Brain microvascular endothelial cell (primary cell): ENCODE measurements at regions of chr9 and their contacts with region 1.

Region 1: DNA sequence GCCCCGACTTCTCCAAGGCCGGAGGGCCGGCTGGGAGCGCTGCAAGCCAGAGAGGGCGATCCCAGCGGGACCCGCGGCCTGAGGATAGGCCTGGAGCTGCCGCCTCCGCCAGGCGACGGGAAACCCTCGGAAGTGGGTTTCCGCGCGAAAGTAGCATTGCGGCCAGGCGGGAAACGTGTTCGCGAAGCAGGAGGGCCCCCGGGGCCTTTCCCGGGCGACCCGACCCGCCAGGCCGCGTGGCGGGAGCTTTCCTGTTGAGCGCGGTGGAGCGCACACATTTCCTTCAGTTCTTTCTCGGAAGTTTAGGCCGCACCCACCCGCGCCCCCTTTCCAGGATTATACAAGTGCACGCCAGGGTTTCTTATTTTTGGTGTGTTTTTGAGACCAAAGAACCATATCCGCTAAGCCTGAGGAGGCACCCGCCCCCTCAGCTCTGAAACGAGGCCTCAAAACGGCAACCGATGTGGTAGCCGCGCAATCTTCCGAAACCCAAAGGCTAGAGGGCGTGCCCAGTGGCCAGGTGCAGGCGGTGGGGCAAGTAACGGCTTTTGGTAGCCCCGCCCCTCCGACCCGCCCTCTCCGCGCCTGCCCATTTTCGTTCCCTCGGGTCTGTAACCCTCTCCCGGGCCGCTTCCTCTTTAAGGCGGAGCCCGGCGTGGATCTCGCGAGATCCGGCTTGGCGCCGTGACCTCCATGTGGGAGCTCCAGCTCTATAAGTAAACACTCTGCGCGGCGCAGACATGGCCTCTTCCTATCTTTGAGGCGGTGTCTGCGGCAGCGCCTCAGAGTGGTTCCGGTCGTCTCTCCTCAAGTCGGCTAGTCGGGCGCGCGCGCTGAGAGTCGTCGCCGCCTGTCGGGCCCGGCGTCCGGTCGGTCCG is at the start of gene UHRF2:
- DNase-seq: peak; percentile 97
- H3K4me3 ChIP-seq: peak within 1 kb of the TSS; percentile 86
- H3K27ac ChIP-seq: peak within 1 kb of the TSS; percentile 48
- H3K27me3 ChIP-seq: no peaks in the 10 kb centered on the region
- CTCF ChIP-seq: no peak

Region 2: DNA sequence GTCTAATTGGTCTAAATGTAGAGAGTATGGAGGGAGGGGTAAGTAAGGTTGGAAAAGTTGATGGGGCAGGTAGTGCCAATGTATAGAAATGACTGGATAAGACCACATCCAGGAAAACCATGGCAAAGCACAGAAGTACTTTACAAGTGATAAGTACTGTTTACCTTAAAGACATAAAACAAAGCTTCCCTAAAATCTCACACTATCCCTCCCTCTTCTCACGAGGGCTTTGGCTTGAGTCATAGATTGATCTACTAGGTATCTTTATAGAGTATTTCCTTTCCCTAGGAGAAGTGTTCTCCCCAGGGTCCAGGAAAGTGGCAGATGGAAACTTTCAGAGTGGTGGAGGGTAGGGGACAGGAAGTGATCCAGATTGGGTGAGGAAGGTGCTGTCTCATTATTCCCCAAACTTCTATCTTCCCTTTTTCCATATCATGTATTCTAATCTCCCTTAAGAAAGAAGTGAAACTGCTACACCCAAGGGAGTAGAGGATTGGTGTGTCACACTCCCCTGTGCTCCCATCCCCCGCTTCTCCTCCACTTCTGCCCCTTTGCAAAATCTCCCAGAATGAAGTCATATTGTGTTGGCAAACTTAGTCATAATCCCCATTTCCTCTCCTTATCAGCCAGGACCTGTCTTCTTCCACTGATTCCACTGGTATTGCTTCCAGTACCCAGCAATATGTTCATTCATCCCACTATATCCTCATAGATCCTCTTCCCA is 182.5 kb before region 1 on chr9:
- in situ Hi-C with region 1: no loop called
- DNase-seq: peak; percentile 35
- H3K4me3 ChIP-seq: no peak overlapping the region
- H3K27ac ChIP-seq: no peak overlapping the region
- H3K27me3 ChIP-seq: no peaks in the 10 kb centered on the region
- CTCF ChIP-seq: no peak

Region 3: DNA sequence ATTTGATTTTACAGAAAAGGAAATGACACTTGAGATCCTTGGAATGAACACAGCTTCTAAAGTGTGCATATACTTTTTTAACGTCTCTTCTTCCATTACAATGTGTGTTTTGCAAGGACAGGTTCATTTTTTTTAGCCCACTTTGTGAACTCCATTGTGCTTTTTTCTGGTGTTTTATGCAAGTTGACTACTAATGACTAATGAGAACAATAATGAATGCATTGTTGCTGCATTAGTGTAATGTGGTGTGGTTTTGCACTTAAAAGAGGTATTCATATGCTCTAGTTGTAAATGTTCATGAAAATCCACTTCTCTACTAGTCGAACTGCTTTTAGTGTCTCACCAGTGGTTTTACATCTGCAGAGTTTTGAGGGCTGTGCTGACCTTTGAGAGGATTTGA is 93.8 kb after region 1 on chr9:
- in situ Hi-C with region 1: loop called (anchors 25 kb)
- DNase-seq: no peak
- H3K4me3 ChIP-seq: no peak overlapping the region
- H3K27ac ChIP-seq: no peak overlapping the region
- H3K27me3 ChIP-seq: no peaks in the 10 kb centered on the region
- CTCF ChIP-seq: no peak

Region 4: DNA sequence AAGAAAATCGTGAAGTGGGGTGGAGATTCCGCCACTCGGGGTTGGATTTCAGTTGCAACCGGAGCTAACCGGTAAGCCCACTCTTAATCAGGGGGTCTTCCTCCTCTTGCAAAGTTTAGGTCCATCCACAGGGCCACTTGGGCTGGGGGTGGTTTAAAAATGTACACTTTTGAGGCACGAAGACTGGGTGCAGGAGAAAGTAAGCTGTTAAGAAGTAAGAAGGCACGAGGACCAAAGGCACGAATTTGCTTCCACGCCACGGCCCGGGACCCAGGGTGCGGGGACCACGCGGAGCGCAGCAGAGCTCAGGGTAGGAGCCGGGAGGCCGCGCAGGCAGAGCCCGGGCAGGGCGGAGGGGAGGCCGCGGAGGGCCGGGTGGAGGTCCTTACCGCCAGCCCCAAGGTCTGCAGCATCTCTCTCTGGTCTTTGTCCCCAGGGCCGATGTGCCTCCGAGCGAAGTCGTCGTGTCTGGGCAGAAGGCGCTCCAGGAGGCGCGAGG is 232.2 kb after region 1 on chr9:
- in situ Hi-C with region 1: no loop called
- DNase-seq: no peak
- H3K4me3 ChIP-seq: peak overlapping the region; percentile 9
- H3K27ac ChIP-seq: no peak overlapping the region
- H3K27me3 ChIP-seq: peaks cover 32% of the 10 kb centered on the region
- CTCF ChIP-seq: no peak

Region 5: GRCh38 chr9:6794936-6795335 is 382.2 kb after region 1 on chr9:
- in situ Hi-C with region 1: no loop called
- DNase-seq: no peak
- H3K4me3 ChIP-seq: no peak overlapping the region
- H3K27ac ChIP-seq: no peak overlapping the region
- H3K27me3 ChIP-seq: no peaks in the 10 kb centered on the region
- CTCF ChIP-seq: no peak